Mammary epithelial cell (primary cell): ENCODE measurements at regions of chr5 and their contacts with region 1.

Region 1: GRCh38 chr5:168275940-168276339 is 15.5 kb upstream of the WWC1 start:
- DNase-seq: no peak
- H3K4me3 ChIP-seq: no peak overlapping the region
- H3K27ac ChIP-seq: no peak overlapping the region
- H3K4me1 ChIP-seq: no peaks in the 10 kb centered on the region
- H3K27me3 ChIP-seq: no peaks in the 10 kb centered on the region
- CTCF ChIP-seq: no peak

Region 2: DNA sequence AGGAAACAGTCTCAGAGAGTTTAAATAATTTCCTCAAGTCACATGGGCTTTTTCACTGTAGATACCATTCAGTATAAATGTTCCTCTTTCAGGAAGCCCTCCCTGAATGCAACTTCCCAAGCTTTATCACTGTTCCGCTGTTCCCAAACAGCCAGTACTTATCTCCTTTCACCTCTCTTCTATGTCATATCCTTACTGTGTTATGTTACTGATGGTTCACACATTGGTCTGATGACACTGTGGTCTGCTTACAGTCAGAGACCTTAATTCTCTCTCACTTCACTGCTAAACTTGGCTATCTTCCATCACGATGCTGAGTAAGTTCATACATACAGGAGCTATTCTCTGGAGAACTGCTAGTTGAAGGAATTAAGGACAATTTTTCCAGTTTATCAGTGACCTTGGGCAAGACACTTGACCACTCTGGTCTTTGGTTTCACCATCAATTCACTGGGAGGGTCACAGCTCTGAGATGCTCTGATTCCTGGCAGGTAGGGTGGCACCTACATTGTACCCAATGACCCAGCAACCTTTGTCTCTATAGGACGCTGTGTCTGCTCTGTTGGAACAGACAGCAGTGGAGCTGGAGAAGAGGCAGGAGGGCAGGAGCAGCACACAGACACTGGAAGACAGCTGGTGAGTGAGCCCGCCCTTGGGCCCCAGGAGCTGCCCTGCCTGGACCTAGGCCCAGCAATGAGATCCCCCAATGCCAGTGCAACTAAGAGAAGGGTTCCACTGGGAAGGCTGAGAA is 168.2 kb after region 1 on chr5:
- CTCF ChIA-PET with region 1: no interaction called
- dilution Hi-C with region 1: loop called (anchors 5 kb)
- in situ Hi-C with region 1: no loop called
- intact Hi-C with region 1: no loop called
- DNase-seq: no peak
- H3K4me3 ChIP-seq: no peak overlapping the region
- H3K27ac ChIP-seq: no peak overlapping the region
- H3K4me1 ChIP-seq: no peaks in the 10 kb centered on the region
- H3K27me3 ChIP-seq: no peaks in the 10 kb centered on the region
- CTCF ChIP-seq: no peak